HepG2 (cell line): ENCODE measurements at regions of chr6 and their contacts with region 1.

Region 1: GRCh38 chr6:25851961-25852360 is 20.1 kb upstream of the SLC17A1 start:
- DNase-seq: no peak
- ATAC-seq: no peak
- H3K4me3 ChIP-seq: no peak overlapping the region
- H3K27ac ChIP-seq: no peak overlapping the region
- H3K4me1 ChIP-seq: peaks cover 13% of the 10 kb centered on the region
- H3K27me3 ChIP-seq: no peaks in the 10 kb centered on the region
- CTCF ChIP-seq: no peak
- EP300 ChIP-seq: no peak
- POLR2A ChIP-seq: no peak
- RAD21 ChIP-seq: no peak

Region 2: DNA sequence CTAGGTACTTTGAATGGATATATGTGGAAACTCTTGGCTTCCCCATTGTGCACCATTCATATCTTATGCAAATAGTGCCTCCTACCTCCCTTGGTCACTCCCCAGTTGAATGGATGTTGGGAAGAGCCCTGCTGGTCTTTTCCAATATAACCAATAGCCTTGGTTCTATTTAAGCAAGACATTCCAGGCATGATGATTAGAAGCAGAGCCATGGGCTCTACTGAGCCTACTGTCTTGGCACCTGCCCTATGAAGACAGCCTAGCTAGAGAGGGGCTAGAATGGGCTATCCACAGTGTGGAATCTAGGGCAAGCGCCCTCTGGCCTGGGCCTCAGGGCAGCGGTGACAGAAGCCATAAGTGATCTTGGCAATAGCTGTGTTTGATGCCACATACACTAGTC is 35.7 kb before region 1 on chr6:
- CTCF ChIA-PET with region 1: no interaction called
- POLR2A ChIA-PET with region 1: no interaction called
- in situ Hi-C with region 1: no loop called
- intact Hi-C with region 1: loop called (anchors 5 kb)
- DNase-seq: no peak
- ATAC-seq: no peak
- H3K4me3 ChIP-seq: no peak overlapping the region
- H3K27ac ChIP-seq: no peak overlapping the region
- H3K4me1 ChIP-seq: no peaks in the 10 kb centered on the region
- H3K27me3 ChIP-seq: no peaks in the 10 kb centered on the region; a peak in 1 of 5 replicates
- CTCF ChIP-seq: no peak
- EP300 ChIP-seq: no peak
- POLR2A ChIP-seq: no peak
- RAD21 ChIP-seq: no peak

Region 3: GRCh38 chr6:26234421-26235296 is 382.7 kb after region 1 on chr6:
- CTCF ChIA-PET with region 1: no interaction called
- POLR2A ChIA-PET with region 1: no interaction called
- in situ Hi-C with region 1: no loop called
- intact Hi-C with region 1: no loop called
- DNase-seq: no peak
- ATAC-seq: peak; percentile 90
- H3K4me3 ChIP-seq: peak overlapping the region; percentile 49 to 73 (median 60)
- H3K27ac ChIP-seq: no peak overlapping the region
- H3K4me1 ChIP-seq: peaks cover 25% of the 10 kb centered on the region; the same call in 1 of the 2 replicates
- H3K27me3 ChIP-seq: peaks cover 0 to 28% of the 10 kb centered on the region in 2 experiments; a peak in 3 of 5 replicates
- CTCF ChIP-seq: no peak
- EP300 ChIP-seq: no peak
- POLR2A ChIP-seq: no peak
- RAD21 ChIP-seq: no peak